Natural killer cell (primary cell): ENCODE measurements at regions of chr16 and their contacts with region 1.

Region 1: DNA sequence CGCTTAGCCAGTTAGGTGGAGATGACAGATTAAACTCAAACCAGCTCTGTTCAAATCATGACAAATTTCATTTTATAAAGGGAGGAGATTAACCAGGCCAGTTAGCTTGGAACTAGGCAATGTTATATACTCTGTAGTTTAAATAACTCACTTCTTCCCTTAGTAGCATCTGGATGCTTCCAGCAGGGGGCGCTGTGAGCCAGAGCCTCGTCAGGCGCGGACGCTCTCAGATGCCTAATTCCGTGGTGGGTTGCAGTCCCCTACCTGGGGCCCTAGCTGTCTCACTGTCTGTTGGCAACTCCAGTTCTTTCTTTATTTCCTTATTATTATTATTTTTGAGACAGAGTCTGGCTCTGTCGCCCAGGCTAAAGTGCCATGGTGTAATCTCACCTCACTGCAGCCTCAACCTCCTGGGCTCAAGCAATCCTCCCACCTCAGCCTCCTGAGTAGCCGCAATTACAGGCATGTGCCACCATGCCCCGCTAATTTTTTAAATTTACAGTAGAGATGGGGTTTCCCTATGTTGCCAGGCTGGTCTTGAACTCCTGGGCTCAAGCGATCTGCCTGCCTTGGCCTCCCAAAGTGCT is 17.3 kb upstream of the WFDC1 start:
- DNase-seq: peak; percentile 46 to 84
- ATAC-seq: peak; percentile 34 to 69 (median 61)
- H3K4me3 ChIP-seq: no peak overlapping the region
- H3K4me3 Mint-ChIP-seq: no peak overlapping the region
- H3K27ac ChIP-seq: no peak overlapping the region
- H3K27ac Mint-ChIP-seq: no peak overlapping the region
- H3K4me1 ChIP-seq: no peaks in the 10 kb centered on the region
- H3K4me1 Mint-ChIP-seq: no peaks in the 10 kb centered on the region
- H3K27me3 ChIP-seq: no peaks in the 10 kb centered on the region
- H3K27me3 Mint-ChIP-seq: peaks cover 7 to 8% of the 10 kb centered on the region in 2 donors
- CTCF ChIP-seq: peak; percentile 72

Region 2: DNA sequence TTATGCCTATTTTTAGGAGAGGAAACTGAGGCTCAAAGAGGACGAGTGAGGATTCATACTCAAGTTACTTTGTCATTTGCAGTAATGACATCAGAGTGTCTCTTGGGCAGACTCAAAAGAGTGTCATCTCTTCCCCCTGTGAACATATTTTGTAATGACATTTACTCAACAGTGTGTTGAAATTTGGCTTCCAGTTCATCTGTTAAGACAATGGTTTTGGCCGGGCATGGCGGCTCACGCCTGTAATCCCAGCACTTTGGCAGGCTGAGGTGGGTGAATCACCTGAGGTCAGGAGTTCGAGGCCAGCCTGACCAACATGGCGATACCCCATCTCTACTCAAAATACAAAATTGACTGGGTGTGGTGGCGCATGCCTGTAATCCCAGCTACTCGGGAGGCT is 46.3 kb after region 1 on chr16:
- intact Hi-C with region 1: no loop called
- DNase-seq: no peak
- ATAC-seq: no peak
- H3K4me3 ChIP-seq: no peak overlapping the region
- H3K4me3 Mint-ChIP-seq: no peak overlapping the region
- H3K27ac ChIP-seq: no peak overlapping the region
- H3K27ac Mint-ChIP-seq: no peak overlapping the region
- H3K4me1 ChIP-seq: no peaks in the 10 kb centered on the region
- H3K4me1 Mint-ChIP-seq: no peaks in the 10 kb centered on the region
- H3K27me3 ChIP-seq: no peaks in the 10 kb centered on the region
- H3K27me3 Mint-ChIP-seq: no peaks in the 10 kb centered on the region
- CTCF ChIP-seq: no peak

Region 3: DNA sequence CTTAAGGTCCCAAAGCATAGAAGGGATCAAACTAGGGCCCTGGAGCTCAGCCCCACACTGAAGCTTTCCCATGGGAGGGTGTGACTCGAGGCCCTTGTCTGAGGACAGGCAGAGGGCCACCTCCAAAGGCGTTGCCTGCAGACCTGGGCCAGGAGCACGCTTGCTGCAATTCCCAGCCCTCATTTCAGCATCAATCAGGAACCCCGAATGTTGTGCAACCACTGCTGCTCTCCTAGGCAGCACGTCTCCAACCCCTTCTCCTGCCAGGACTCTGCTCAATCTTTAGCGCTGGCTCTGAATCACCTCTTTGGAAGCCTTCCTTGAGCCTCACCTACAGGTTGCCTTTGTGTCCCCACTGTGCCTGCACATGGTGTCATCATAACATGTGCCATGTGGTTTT is 77.0 kb after region 1 on chr16:
- intact Hi-C with region 1: no loop called
- DNase-seq: no peak
- ATAC-seq: no peak
- H3K4me3 ChIP-seq: no peak overlapping the region
- H3K4me3 Mint-ChIP-seq: no peak overlapping the region
- H3K27ac ChIP-seq: no peak overlapping the region
- H3K27ac Mint-ChIP-seq: no peak overlapping the region
- H3K4me1 ChIP-seq: peaks cover 2% of the 10 kb centered on the region
- H3K4me1 Mint-ChIP-seq: no peaks in the 10 kb centered on the region
- H3K27me3 ChIP-seq: no peaks in the 10 kb centered on the region
- H3K27me3 Mint-ChIP-seq: peaks cover 0 to 2% of the 10 kb centered on the region in 2 donors
- CTCF ChIP-seq: no peak

Region 4: DNA sequence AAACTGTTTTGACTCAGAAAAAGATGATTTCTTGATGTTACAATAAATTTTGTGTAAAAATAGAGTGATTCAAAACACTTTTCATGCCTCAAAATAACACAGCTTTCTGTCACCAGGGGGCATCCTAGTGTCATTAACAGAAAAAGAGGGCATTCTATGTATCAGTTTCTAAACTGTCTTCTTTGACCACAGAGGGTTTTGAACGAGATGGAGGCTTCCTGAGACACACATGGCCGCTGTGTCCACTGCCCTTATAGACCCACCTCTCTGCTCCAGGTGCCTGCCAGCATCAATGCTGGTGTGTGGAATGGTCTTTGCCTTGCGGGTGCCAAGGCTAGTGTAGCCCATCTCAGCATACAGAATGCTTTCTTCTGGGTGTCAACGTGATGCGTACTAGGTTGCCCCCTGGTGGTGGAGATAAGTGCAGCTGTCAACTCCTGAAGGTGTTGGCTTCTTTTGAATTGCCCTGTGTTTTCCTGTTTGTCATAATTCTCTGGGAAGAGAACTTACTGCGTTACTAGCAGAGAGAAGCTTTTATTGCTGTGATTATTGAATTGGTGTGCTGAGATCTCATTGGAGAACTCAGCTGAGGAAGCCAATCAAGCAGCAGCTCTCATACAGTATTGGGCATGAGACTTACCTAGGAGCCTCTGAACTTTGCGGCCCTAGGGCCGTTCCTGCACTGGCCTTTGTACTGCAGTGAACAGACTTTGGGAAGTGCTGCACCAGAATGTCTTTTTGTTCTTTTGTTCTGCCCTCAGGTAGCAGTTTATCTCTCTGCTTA is 461.1 kb after region 1 on chr16:
- intact Hi-C with region 1: loop called (anchors 10 kb)
- DNase-seq: peak; percentile 69 to 91
- ATAC-seq: peak; percentile 85 to 89 (median 88)
- H3K4me3 ChIP-seq: no peak overlapping the region
- H3K4me3 Mint-ChIP-seq: peak overlapping the region; percentile 45
- H3K27ac ChIP-seq: no peak overlapping the region
- H3K27ac Mint-ChIP-seq: peak overlapping the region in 1 of 2 donors; percentile 70
- H3K4me1 ChIP-seq: peaks cover 25% of the 10 kb centered on the region
- H3K4me1 Mint-ChIP-seq: peaks cover 48 to 62% of the 10 kb centered on the region in 2 donors
- H3K27me3 ChIP-seq: no peaks in the 10 kb centered on the region
- H3K27me3 Mint-ChIP-seq: no peaks in the 10 kb centered on the region
- CTCF ChIP-seq: peak; percentile 87